B cell (primary cell): ENCODE measurements at regions of chr7 and their contacts with region 1.

Region 1: GRCh38 chr7:5396999-5397663 is 26.5 kb downstream of the TNRC18 start:
- DNase-seq: peak; percentile 96
- ATAC-seq: peak; percentile 94
- H3K4me3 ChIP-seq: peak overlapping the region; percentile 70 to 87 (median 79)
- H3K4me3 Mint-ChIP-seq: peak overlapping the region; percentile 86
- H3K27ac ChIP-seq: peak overlapping the region; percentile 81 to 96
- H3K27ac Mint-ChIP-seq: peak overlapping the region; percentile 89
- H3K4me1 ChIP-seq: peaks cover 19 to 33% of the 10 kb centered on the region in 2 donors
- H3K4me1 Mint-ChIP-seq: peaks cover 27% of the 10 kb centered on the region
- H3K27me3 ChIP-seq: no peaks in the 10 kb centered on the region
- H3K27me3 Mint-ChIP-seq: no peaks in the 10 kb centered on the region
- CTCF ChIP-seq: no peak

Region 2: DNA sequence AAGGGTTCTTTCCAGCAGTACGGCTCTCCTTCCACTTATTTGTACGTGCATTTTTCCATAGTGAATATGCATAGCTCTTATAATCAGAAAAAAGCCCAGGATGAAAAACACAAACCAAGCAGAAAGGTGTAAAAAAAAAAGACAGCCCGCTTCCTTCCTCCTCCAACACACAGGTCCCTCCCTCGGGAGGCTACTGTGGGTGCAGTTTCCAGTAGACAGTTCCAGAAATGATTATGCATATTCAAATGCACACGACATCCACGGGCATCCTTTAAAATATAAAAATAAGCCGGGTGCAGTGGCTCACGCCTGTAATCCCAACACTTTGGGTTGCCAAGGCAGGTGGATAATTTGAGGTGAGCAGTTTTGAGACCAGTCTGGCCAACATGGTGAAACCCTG is 33.4 kb before region 1 on chr7:
- CTCF ChIA-PET with region 1: interaction called, 18 read pairs
- POLR2A ChIA-PET with region 1: interaction called, 9 read pairs
- intact Hi-C with region 1: loop called (anchors 1 kb)
- DNase-seq: no peak
- ATAC-seq: peak; percentile 25
- H3K4me3 ChIP-seq: no peak overlapping the region
- H3K4me3 Mint-ChIP-seq: no peak overlapping the region
- H3K27ac ChIP-seq: no peak overlapping the region
- H3K27ac Mint-ChIP-seq: peak overlapping the region; percentile 5
- H3K4me1 ChIP-seq: peaks cover 7 to 23% of the 10 kb centered on the region in 2 donors
- H3K4me1 Mint-ChIP-seq: peaks cover 18% of the 10 kb centered on the region
- H3K27me3 ChIP-seq: no peaks in the 10 kb centered on the region
- H3K27me3 Mint-ChIP-seq: no peaks in the 10 kb centered on the region
- CTCF ChIP-seq: no peak

Region 3: DNA sequence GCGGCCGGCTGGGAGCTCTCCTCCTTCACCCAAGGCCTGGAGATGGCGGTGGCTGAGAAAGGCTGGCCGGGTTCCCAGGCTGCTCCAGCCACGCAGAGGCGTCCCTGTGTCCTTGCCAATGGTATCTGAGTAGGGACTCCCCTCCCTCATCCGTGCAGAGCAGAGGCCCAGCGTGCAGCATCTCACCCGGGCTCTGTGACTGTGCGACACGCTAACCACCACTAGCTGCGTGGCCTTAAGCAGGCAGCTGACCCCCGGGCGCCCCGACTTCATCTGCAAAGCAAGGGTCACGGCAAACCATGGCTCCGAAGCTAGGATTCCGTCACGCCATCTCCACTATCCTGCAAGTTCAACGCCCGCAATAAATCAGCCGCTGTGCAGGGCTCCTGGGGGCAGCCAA is 73.7 kb after region 1 on chr7:
- CTCF ChIA-PET with region 1: no interaction called
- POLR2A ChIA-PET with region 1: interaction called, 11 read pairs
- intact Hi-C with region 1: no loop called
- DNase-seq: no peak
- ATAC-seq: no peak
- H3K4me3 ChIP-seq: no peak overlapping the region
- H3K4me3 Mint-ChIP-seq: no peak overlapping the region
- H3K27ac ChIP-seq: no peak overlapping the region
- H3K27ac Mint-ChIP-seq: no peak overlapping the region
- H3K4me1 ChIP-seq: no peaks in the 10 kb centered on the region
- H3K4me1 Mint-ChIP-seq: no peaks in the 10 kb centered on the region
- H3K27me3 ChIP-seq: no peaks in the 10 kb centered on the region
- H3K27me3 Mint-ChIP-seq: no peaks in the 10 kb centered on the region
- CTCF ChIP-seq: no peak

Region 4: GRCh38 chr7:5557920-5558401 is 160.8 kb after region 1 on chr7:
- CTCF ChIA-PET with region 1: interaction called, 8 read pairs
- POLR2A ChIA-PET with region 1: interaction called, 8 read pairs
- intact Hi-C with region 1: loop called (anchors 1 kb)
- DNase-seq: peak; percentile 77
- ATAC-seq: peak; percentile 18
- H3K4me3 ChIP-seq: peak overlapping the region; percentile 41 to 67 (median 58)
- H3K4me3 Mint-ChIP-seq: peak overlapping the region; percentile 92
- H3K27ac ChIP-seq: peak overlapping the region; percentile 92 to 93
- H3K27ac Mint-ChIP-seq: peak overlapping the region; percentile 96
- H3K4me1 ChIP-seq: peaks cover 47 to 64% of the 10 kb centered on the region in 2 donors
- H3K4me1 Mint-ChIP-seq: peaks cover 52% of the 10 kb centered on the region
- H3K27me3 ChIP-seq: no peaks in the 10 kb centered on the region
- H3K27me3 Mint-ChIP-seq: no peaks in the 10 kb centered on the region
- CTCF ChIP-seq: no peak

Region 5: GRCh38 chr7:5694912-5695726 is 298.0 kb after region 1 on chr7:
- CTCF ChIA-PET with region 1: interaction called, 10 read pairs
- POLR2A ChIA-PET with region 1: no interaction called
- intact Hi-C with region 1: loop called (anchors 10 kb)
- DNase-seq: peak; percentile 58
- ATAC-seq: peak; percentile 44
- H3K4me3 ChIP-seq: peak overlapping the region; percentile 39 to 56 (median 49)
- H3K4me3 Mint-ChIP-seq: peak overlapping the region; percentile 88
- H3K27ac ChIP-seq: peak overlapping the region; percentile 93 to 94
- H3K27ac Mint-ChIP-seq: peak overlapping the region; percentile 93
- H3K4me1 ChIP-seq: peaks cover 83 to 96% of the 10 kb centered on the region in 2 donors
- H3K4me1 Mint-ChIP-seq: peaks cover 94% of the 10 kb centered on the region
- H3K27me3 ChIP-seq: no peaks in the 10 kb centered on the region
- H3K27me3 Mint-ChIP-seq: no peaks in the 10 kb centered on the region
- CTCF ChIP-seq: no peak